Activated naive CD4-positive, alpha-beta T cell treated with anti-CD3 and anti-CD28 coated beads for 36 hours (primary cell): ENCODE measurements at regions of chr12 and their contacts with region 1.

Region 1: DNA sequence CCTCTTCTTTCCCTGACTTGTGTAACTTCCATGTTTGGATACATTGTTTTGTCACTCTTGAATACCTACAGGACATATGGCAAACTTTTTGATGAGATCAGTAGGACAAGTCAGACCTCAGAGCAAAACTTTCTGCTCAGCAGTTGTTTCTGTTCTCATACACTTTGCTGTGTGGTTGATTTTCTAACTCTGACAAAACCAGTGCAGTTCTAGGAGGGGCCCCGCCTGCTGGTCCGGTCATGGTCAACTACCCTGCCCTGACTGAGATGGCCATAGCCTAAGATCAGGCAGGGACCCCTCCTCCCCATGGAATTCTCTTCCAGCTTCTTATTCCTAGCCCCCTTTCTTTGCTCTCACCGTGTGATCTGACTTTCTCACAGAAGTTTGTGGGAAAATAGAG is 92.8 kb downstream of the OTOGL start:
- DNase-seq: no peak
- H3K4me3 Mint-ChIP-seq: no peak overlapping the region
- H3K27ac Mint-ChIP-seq: no peak overlapping the region
- H3K4me1 Mint-ChIP-seq: no peaks in the 10 kb centered on the region
- H3K27me3 Mint-ChIP-seq: no peaks in the 10 kb centered on the region

Region 2: GRCh38 chr12:80241576-80242273 is 49.6 kb after region 1 on chr12:
- CTCF ChIA-PET with region 1: no interaction called
- intact Hi-C with region 1: no loop called
- DNase-seq: no peak
- H3K4me3 Mint-ChIP-seq: no peak overlapping the region
- H3K27ac Mint-ChIP-seq: no peak overlapping the region
- H3K4me1 Mint-ChIP-seq: no peaks in the 10 kb centered on the region
- H3K27me3 Mint-ChIP-seq: peaks cover 2% of the 10 kb centered on the region

Region 3: GRCh38 chr12:80763874-80764273 is 571.8 kb after region 1 on chr12:
- CTCF ChIA-PET with region 1: no interaction called
- intact Hi-C with region 1: loop called (anchors 5 kb)
- DNase-seq: peak; percentile 9
- H3K4me3 Mint-ChIP-seq: no peak overlapping the region
- H3K27ac Mint-ChIP-seq: no peak overlapping the region
- H3K4me1 Mint-ChIP-seq: no peaks in the 10 kb centered on the region
- H3K27me3 Mint-ChIP-seq: no peaks in the 10 kb centered on the region